Astrocyte of the cerebellum (primary cell): ENCODE measurements at regions of chr7 and their contacts with region 1.

Region 1: DNA sequence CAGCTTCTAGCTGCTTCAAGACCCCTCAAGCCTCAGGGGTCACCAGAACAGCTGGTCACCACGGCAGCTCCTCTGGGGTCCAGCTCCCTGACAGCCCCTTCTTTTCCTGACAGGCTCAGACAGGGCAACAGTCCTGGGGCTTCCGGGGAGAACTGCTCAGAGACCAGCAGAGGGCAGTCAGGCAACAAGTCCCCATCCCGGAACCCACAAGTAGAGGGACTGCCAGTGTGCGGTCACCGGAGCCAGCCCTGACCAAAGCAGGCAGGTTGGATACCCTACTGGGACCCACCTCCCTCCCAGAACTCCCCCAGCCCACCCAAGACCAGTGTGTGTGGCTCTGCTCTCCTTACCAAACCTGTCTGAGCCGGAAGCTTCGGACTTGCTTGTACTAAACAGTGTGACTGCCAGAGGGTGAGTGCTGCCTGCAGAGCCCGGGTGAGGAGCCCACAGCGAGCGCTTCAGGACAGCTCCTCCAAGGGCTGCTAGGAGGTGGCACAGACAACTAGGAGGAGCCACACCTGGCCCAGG is 40.3 kb downstream of the YKT6 start:
- DNase-seq: peak; percentile 56
- H3K4me3 ChIP-seq: no peak overlapping the region
- CTCF ChIP-seq: peak; percentile 84

Region 2: DNA sequence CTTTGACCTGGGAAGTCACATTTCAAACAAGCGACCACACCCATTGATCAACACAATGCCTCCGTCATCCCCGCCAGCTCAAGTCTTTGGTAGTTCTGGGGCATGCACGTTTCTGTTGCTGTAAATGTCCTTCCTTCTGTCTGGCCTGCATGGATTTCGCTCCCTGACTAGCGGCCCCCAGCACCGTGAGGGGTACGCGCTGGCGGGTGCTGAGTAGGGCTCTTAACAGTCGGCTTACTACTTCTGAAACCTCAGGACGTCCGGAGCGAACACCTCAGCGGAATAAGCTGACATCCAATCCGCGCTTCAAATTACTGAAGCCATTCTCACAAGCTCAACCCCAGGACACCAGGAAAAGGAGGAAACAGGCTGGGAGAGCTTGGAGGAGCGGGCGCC is 248.9 kb after region 1 on chr7:
- in situ Hi-C with region 1: loop called (anchors 10 kb)
- DNase-seq: no peak
- H3K4me3 ChIP-seq: peak overlapping the region; percentile 91
- CTCF ChIP-seq: no peak

Region 3: GRCh38 chr7:44573464-44574286 is 332.6 kb after region 1 on chr7 and contains the start of gene DDX56:
- in situ Hi-C with region 1: loop called (anchors 25 kb)
- DNase-seq: peak; percentile 78
- H3K4me3 ChIP-seq: peak within 1 kb of the TSS; percentile 89
- CTCF ChIP-seq: no peak